Breast epithelium (tissue), 4 donors: ENCODE measurements at regions of chr5 and their contacts with region 1.

Region 1: GRCh38 chr5:173205916-173206315 is 29.1 kb downstream of the NKX2-5 start:
- DNase-seq: no peak
- H3K4me3 ChIP-seq: no peak overlapping the region
- H3K27ac ChIP-seq: no peak overlapping the region
- H3K4me1 ChIP-seq: no peaks in the 10 kb centered on the region
- H3K27me3 ChIP-seq: peaks cover 0 to 7% of the 10 kb centered on the region in 2 donors
- CTCF ChIP-seq: no peak
- POLR2A ChIP-seq: no peak

Region 2: GRCh38 chr5:172764849-172765765 is 440.8 kb before region 1 on chr5:
- intact Hi-C with region 1: no loop called
- DNase-seq: peak; percentile 97 to 99
- H3K4me3 ChIP-seq: peak overlapping the region; percentile 93 to 97 (median 94)
- H3K27ac ChIP-seq: peak overlapping the region; percentile 97 to 100
- H3K4me1 ChIP-seq: peaks cover 0 to 4% of the 10 kb centered on the region in 2 donors
- H3K27me3 ChIP-seq: no peaks in the 10 kb centered on the region
- CTCF ChIP-seq: no peak
- POLR2A ChIP-seq: no peak

Region 3: GRCh38 chr5:172870291-172870714 is 335.6 kb before region 1 on chr5:
- intact Hi-C with region 1: no loop called
- DNase-seq: peak in 1 of 2 donors; percentile 39
- H3K4me3 ChIP-seq: peak overlapping the region in 1 of 3 donors; percentile 24
- H3K27ac ChIP-seq: peak overlapping the region; percentile 88 to 93
- H3K4me1 ChIP-seq: peaks cover 3 to 51% of the 10 kb centered on the region in 2 donors
- H3K27me3 ChIP-seq: no peaks in the 10 kb centered on the region
- CTCF ChIP-seq: no peak
- POLR2A ChIP-seq: no peak

Region 4: DNA sequence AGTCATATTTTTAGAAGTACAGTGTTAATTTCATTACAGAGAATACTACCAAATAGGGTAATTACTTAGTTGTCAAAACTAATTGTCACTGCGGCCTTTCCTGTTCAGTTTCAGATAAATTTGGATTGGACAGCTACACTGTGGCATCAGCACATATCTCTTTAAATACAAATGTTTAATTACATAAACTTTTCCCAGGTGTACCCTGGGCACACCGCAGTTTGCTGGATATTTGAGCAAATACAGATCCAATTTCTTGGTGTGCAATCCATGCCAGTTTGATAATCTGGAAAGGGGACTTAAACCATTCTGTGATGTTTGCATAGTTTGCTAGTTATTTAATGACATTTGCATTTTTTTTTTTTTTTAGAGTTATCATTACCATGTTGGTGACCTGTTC is 211.5 kb before region 1 on chr5:
- intact Hi-C with region 1: loop called (anchors 5 kb)
- DNase-seq: no peak
- H3K4me3 ChIP-seq: no peak overlapping the region
- H3K27ac ChIP-seq: no peak overlapping the region
- H3K4me1 ChIP-seq: no peaks in the 10 kb centered on the region
- H3K27me3 ChIP-seq: no peaks in the 10 kb centered on the region
- CTCF ChIP-seq: no peak
- POLR2A ChIP-seq: no peak